HCT116 (cell line): ENCODE measurements at regions of chr10 and their contacts with region 1.

Region 1: GRCh38 chr10:90148116-90148855 is 446.9 kb downstream of the KIF20B start:
- DNase-seq: peak; percentile 71
- ATAC-seq: peak; percentile 82
- H3K4me3 ChIP-seq: peak overlapping the region in 1 of 2 experiments; percentile 6; a peak in 1 of 4 replicates
- H3K27ac ChIP-seq: peak overlapping the region; percentile 90
- H3K4me1 ChIP-seq: peaks cover 38 to 52% of the 10 kb centered on the region in 2 experiments
- H3K27me3 ChIP-seq: no peaks in the 10 kb centered on the region
- CTCF ChIP-seq: peak; percentile 50 to 76 (median 75); a peak in 5 of 6 replicates
- POLR2A ChIP-seq: no peak
- RAD21 ChIP-seq: peak; percentile 90

Region 2: DNA sequence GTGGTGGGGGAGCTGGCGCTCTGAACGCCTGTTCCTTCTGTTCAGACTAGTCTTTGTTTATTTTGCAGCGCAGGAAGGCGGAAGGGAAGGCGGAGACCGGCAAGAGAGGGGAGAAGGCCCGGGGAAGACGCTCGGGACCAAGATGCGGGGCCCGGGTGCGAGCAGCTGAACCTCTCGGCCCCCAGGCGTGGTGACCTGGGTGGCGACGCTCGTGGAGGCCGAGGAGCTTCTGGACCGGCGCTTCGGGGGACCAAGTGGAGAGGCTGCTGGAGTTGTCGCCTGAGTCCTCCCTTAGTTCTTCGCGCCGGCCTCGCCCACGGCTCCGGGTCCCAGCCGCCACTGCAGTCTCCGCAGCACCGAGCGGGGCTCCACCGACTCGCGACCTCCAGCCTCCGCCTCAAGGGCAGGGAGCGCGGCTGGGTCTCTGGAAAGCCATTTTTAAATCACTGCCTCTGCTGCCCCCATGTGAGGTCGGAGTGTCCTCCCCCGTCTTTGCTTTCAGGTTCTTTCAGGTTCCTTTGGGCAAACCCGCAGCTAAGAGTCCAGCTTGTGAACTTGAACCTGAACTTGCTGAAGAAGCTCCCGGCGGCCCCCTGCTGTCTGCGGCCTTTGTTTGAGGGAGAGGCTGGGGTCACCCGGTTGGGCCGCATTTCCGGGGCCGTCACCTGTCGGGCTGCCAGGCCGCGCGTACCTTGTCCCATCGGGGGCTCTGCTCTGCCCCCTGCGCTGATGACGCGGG is 311.0 kb before region 1 on chr10:
- CTCF ChIA-PET with region 1: no interaction called
- POLR2A ChIA-PET with region 1: no interaction called
- RAD21 ChIA-PET with region 1: no interaction called
- intact Hi-C with region 1: no loop called
- DNase-seq: no peak
- ATAC-seq: no peak
- H3K4me3 ChIP-seq: no peak overlapping the region
- H3K27ac ChIP-seq: no peak overlapping the region
- H3K4me1 ChIP-seq: no peaks in the 10 kb centered on the region
- H3K27me3 ChIP-seq: no peaks in the 10 kb centered on the region
- CTCF ChIP-seq: no peak
- POLR2A ChIP-seq: no peak
- RAD21 ChIP-seq: no peak

Region 3: DNA sequence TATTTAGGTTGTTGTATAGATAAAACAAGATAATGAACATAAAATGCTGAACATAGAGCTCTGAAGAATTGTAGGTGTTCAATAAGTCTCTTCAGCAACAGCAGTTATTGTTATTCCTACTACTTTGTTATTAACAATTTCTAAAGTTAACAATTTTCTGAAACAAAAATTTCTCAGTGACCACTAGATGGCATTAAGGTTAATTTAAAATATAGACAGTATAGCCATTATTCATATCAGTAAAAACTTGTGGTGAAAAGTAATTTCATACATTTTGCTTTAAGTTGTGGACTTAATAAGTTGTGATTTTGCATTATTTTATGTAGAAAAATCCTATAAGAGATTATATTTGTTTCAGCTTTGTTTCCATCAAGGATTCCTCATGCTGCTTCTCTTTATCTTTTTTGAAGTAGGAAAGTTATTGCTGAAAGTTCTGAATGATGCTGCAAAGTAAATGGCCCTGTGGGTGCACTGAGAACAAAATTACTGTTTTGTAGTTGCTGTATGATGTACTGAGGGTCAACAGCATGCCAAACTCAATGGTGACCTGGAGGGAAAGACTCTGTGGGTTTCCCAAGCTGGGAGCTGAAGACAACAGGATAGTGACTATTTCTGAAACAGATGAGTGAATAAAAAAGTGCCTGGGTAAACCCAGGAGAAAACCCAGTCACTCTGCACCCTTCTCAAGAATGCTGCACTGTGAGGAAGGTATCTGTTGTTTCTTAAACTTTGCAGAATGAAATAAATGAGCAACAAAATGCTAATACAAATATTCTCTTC is 193.3 kb before region 1 on chr10:
- CTCF ChIA-PET with region 1: no interaction called
- POLR2A ChIA-PET with region 1: no interaction called
- RAD21 ChIA-PET with region 1: no interaction called
- intact Hi-C with region 1: loop called (anchors 5 kb)
- DNase-seq: no peak
- ATAC-seq: no peak
- H3K4me3 ChIP-seq: no peak overlapping the region
- H3K27ac ChIP-seq: peak overlapping the region; percentile 31; the same call in 1 of the 2 replicates
- H3K4me1 ChIP-seq: peaks cover 0 to 7% of the 10 kb centered on the region in 2 experiments; a peak in 2 of 4 replicates
- H3K27me3 ChIP-seq: no peaks in the 10 kb centered on the region
- CTCF ChIP-seq: peak; percentile 18 to 64 (median 37); a peak in 4 of 6 replicates
- POLR2A ChIP-seq: no peak
- RAD21 ChIP-seq: peak; percentile 59

Region 4: GRCh38 chr10:90130321-90131086 is 17.8 kb before region 1 on chr10:
- CTCF ChIA-PET with region 1: no interaction called
- POLR2A ChIA-PET with region 1: no interaction called
- RAD21 ChIA-PET with region 1: no interaction called
- intact Hi-C with region 1: no loop called
- DNase-seq: no peak
- ATAC-seq: no peak
- H3K4me3 ChIP-seq: no peak overlapping the region
- H3K27ac ChIP-seq: no peak overlapping the region
- H3K4me1 ChIP-seq: no peaks in the 10 kb centered on the region
- H3K27me3 ChIP-seq: no peaks in the 10 kb centered on the region
- CTCF ChIP-seq: no peak
- POLR2A ChIP-seq: no peak
- RAD21 ChIP-seq: no peak

Region 5: DNA sequence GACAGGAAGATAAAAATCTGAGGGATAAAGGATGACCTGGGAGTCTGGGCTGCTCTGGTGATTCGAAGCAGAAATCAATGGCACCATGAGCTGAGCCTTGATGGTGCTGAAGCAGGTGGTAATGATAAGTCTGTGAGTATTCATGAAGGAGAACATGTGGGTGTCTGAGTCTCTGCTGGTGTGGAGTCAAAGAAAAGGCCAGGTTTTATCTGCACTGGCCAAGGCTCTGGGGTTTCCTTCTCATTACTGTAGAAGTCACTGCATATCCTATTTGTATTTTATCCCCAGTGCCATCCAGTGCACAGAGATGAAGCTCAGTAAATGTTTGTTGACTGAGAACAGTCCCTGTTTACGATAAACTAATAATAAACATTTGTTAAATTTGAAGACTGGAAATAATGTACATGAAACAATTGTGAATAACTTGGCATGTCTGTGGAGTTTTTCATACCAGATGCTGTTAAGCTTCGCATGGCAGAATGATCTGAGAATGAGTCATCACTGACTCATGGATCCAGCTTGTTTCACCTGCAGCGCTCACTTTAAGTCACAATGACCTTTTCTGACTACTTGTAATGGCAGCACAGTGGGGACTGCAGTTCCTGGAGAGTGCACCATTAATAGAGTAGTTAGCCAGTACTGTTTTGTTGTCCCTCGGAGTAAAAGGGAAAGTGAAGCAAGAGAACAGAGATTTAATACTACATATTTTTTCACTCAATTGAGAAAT is 171.1 kb after region 1 on chr10:
- CTCF ChIA-PET with region 1: no interaction called
- POLR2A ChIA-PET with region 1: no interaction called
- RAD21 ChIA-PET with region 1: no interaction called
- intact Hi-C with region 1: loop called (anchors 5 kb)
- DNase-seq: peak; percentile 96
- ATAC-seq: peak; percentile 87
- H3K4me3 ChIP-seq: no peak overlapping the region
- H3K27ac ChIP-seq: peak overlapping the region; percentile 99
- H3K4me1 ChIP-seq: peaks cover 64 to 74% of the 10 kb centered on the region in 2 experiments
- H3K27me3 ChIP-seq: no peaks in the 10 kb centered on the region
- CTCF ChIP-seq: no peak
- POLR2A ChIP-seq: no peak
- RAD21 ChIP-seq: peak; percentile 39

Region 6: DNA sequence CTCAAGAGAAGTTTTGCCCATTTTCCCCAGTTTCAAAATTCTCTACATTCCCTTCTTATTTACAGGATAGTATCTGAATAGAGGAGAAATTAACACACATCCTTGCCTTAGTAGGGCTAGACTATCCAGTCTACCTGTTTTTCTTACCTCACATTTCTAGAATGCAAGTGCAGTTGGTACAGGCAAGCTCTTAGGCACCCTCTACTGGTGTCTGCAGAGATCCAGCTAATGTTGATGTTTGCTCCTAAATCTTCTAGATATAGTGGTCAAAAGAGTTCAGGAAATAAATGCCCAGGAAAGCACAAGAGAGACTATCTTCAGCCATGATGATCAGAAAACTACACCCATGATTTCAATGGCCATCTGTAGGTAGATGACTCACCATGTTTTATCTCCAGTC is 504.2 kb after region 1 on chr10:
- CTCF ChIA-PET with region 1: interaction called, 8 read pairs
- POLR2A ChIA-PET with region 1: no interaction called
- RAD21 ChIA-PET with region 1: interaction called, 3 to 5 read pairs
- intact Hi-C with region 1: loop called (anchors 5 kb)
- DNase-seq: peak; percentile 34
- ATAC-seq: peak; percentile 84
- H3K4me3 ChIP-seq: no peak overlapping the region
- H3K27ac ChIP-seq: no peak overlapping the region; the same call in 1 of the 2 replicates
- H3K4me1 ChIP-seq: 0 out of 4 replicates have a peak, but pooled peaks cover 0 to 5% of the 10 kb centered on the region in 2 experiments
- H3K27me3 ChIP-seq: no peaks in the 10 kb centered on the region
- CTCF ChIP-seq: peak; percentile 37 to 66 (median 59); a peak in 5 of 6 replicates
- POLR2A ChIP-seq: no peak
- RAD21 ChIP-seq: peak; percentile 78

Region 7: DNA sequence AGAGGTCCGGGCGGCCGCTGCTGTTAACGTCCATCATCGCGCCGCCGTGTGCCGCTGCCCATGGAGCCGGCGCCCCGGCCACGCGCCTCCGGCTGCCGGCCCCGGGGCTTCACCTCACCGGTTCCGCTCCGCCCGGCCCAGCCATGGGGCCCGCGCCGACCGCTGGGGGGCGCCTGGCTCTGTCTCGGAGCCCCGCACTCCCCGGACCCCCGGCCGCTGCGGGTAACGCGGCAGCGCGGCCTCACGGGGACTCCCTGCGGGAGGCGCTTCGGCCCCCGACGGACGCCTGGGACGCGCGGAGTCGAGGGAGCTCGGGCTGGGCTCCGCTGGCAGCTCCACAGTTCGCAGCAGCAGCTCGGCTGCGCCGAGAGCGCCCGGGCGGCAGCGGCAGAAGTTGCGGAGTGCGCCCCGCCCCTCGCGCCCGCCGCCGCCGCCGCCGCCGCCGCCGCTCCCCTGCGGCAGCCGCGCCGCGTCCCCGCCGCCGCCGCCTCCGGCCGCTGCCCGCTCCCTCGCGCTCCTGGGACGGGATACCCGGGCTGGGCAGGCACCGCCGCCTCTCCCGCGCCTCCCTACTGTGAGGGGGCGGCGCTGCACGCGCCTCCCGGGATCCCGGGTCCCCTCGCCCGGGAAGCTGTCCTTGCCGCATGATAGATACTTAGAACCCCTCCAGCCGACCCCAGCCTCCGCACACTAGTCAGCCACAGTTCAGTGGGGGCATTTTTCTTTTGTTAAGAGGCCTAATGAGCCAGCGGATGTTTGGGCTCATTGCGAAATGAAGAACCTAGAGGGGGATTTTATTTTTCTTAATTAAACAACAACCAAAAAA is 709.6 kb after region 1 on chr10 and contains the start of gene HTR7:
- CTCF ChIA-PET with region 1: interaction called, 4 read pairs
- POLR2A ChIA-PET with region 1: no interaction called
- RAD21 ChIA-PET with region 1: no interaction called
- intact Hi-C with region 1: loop called (anchors 5 kb)
- DNase-seq: no peak
- ATAC-seq: peak; percentile 79
- H3K4me3 ChIP-seq: peak within 1 kb of the TSS; percentile 68 to 76
- H3K27ac ChIP-seq: peak within 1 kb of the TSS; percentile 95
- H3K4me1 ChIP-seq: peaks cover 20 to 39% of the 10 kb centered on the region in 2 experiments
- H3K27me3 ChIP-seq: no peaks in the 10 kb centered on the region
- CTCF ChIP-seq: peak in 2 of 3 experiments; percentile 42 to 64; a peak in 4 of 6 replicates
- POLR2A ChIP-seq: no peak
- RAD21 ChIP-seq: no peak
- total RNA-seq, gene HTR7: 32.2 TPM

Region 8: GRCh38 chr10:91137822-91138221 is 989.5 kb after region 1 on chr10:
- CTCF ChIA-PET with region 1: no interaction called
- POLR2A ChIA-PET with region 1: no interaction called
- RAD21 ChIA-PET with region 1: no interaction called
- intact Hi-C with region 1: no loop called
- DNase-seq: no peak
- ATAC-seq: no peak
- H3K4me3 ChIP-seq: no peak overlapping the region
- H3K27ac ChIP-seq: no peak overlapping the region
- H3K4me1 ChIP-seq: no peaks in the 10 kb centered on the region
- H3K27me3 ChIP-seq: no peaks in the 10 kb centered on the region
- CTCF ChIP-seq: no peak
- POLR2A ChIP-seq: no peak
- RAD21 ChIP-seq: no peak